ENCODE measurements at regions of chr17 and their contacts with region 1.

Region 1: DNA sequence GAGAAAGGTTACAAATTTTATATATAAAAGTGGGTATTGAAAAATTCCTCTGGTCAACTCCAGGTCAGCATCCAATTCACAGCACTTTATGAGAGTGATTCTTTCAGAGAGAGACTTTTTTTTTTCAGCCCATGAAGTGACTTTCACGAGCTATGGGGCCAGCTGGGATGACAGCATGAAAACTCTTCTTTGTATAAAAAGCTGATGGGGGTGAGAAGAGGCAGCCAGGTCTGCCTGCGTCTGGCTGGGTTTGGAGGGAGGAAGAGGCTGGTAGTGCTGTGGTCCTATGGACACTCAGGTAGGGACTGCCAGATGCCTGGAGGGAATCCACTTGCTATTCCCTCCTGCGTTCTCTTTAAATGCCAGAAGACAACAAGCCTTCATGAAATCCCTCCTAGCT is 250.6 kb downstream of the UTP18 start:
- DNase-seq: no peak
- H3K4me3 ChIP-seq: no peak overlapping the region
- H3K27ac ChIP-seq: no peak overlapping the region
- H3K4me1 ChIP-seq: no peaks in the 10 kb centered on the region
- H3K27me3 ChIP-seq: peaks cover 4% of the 10 kb centered on the region
- CTCF ChIP-seq: no peak

Region 2: GRCh38 chr17:51413723-51414122 is 97.2 kb before region 1 on chr17:
- CTCF ChIA-PET with region 1: no interaction called
- dilution Hi-C with region 1: loop called (anchors 5 kb)
- in situ Hi-C with region 1: no loop called
- intact Hi-C with region 1: no loop called
- DNase-seq: no peak
- H3K4me3 ChIP-seq: no peak overlapping the region
- H3K27ac ChIP-seq: no peak overlapping the region
- H3K4me1 ChIP-seq: no peaks in the 10 kb centered on the region
- H3K27me3 ChIP-seq: no peaks in the 10 kb centered on the region
- CTCF ChIP-seq: no peak

Region 3: DNA sequence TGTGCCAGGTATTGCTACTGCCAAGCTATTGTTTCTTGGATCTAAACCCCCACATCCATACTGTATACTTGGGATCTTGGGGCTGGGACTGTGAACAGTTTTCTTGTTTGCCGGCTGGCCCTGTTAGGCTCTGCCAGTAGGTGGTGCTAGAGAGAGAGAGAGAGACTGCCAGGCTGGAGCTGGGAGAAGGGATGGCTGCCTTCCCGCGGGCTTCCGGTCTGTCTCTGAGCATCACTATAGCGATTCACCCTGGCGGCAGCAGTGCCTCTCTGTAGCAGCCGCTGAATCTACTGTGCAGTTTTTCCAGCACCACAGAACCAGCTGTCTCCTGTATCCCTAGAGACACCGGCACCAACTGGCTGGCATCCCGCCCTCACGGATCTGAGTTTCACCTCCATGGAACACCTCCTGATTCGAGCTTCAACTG is 49.3 kb before region 1 on chr17:
- CTCF ChIA-PET with region 1: no interaction called
- dilution Hi-C with region 1: loop called (anchors 10 kb)
- in situ Hi-C with region 1: no loop called
- intact Hi-C with region 1: no loop called
- DNase-seq: peak; percentile 24
- H3K4me3 ChIP-seq: no peak overlapping the region
- H3K27ac ChIP-seq: no peak overlapping the region
- H3K4me1 ChIP-seq: no peaks in the 10 kb centered on the region
- H3K27me3 ChIP-seq: no peaks in the 10 kb centered on the region
- CTCF ChIP-seq: peak; percentile 85 to 87

Region 4: GRCh38 chr17:51653878-51654277 is 142.9 kb after region 1 on chr17:
- CTCF ChIA-PET with region 1: no interaction called
- dilution Hi-C with region 1: no loop called
- in situ Hi-C with region 1: no loop called
- intact Hi-C with region 1: no loop called
- DNase-seq: no peak
- H3K4me3 ChIP-seq: no peak overlapping the region
- H3K27ac ChIP-seq: no peak overlapping the region
- H3K4me1 ChIP-seq: peaks cover 15% of the 10 kb centered on the region
- H3K27me3 ChIP-seq: peaks cover 3% of the 10 kb centered on the region
- CTCF ChIP-seq: peak in 1 of 2 donors; percentile 22

Region 5: GRCh38 chr17:51813140-51813783 is 302.3 kb after region 1 on chr17:
- CTCF ChIA-PET with region 1: no interaction called
- dilution Hi-C with region 1: no loop called
- in situ Hi-C with region 1: no loop called
- intact Hi-C with region 1: no loop called
- DNase-seq: no peak
- H3K4me3 ChIP-seq: no peak overlapping the region
- H3K27ac ChIP-seq: no peak overlapping the region
- H3K4me1 ChIP-seq: no peaks in the 10 kb centered on the region
- H3K27me3 ChIP-seq: no peaks in the 10 kb centered on the region
- CTCF ChIP-seq: no peak

Measured in mammary epithelial cell (primary cell).